ENCODE measurements at regions of chr1 and their contacts with region 1.

Region 1: GRCh38 chr1:54273092-54273794 is 73.3 kb downstream of the MRPL37 start:
- DNase-seq: peak in 1 of 2 experiments; percentile 65
- H3K4me3 ChIP-seq: no peak overlapping the region; a peak in 1 of 8 replicates
- H3K27ac ChIP-seq: no peak overlapping the region
- H3K4me1 ChIP-seq: peaks cover 9 to 28% (median 21%) of the 10 kb centered on the region in 4 experiments
- H3K27me3 ChIP-seq: no peaks in the 10 kb centered on the region
- CTCF ChIP-seq: peak; percentile 27 to 60 (median 59)
- EP300 ChIP-seq: no peak
- POLR2A ChIP-seq: no peak
- RAD21 ChIP-seq: peak; percentile 59 to 65

Region 2: GRCh38 chr1:53982034-53982762 is 291.0 kb before region 1 on chr1:
- CTCF ChIA-PET with region 1: no interaction called
- POLR2A ChIA-PET with region 1: no interaction called
- DNase-seq: peak; percentile 54 to 76
- H3K4me3 ChIP-seq: peak overlapping the region in 2 of 4 experiments; percentile 29 to 51; a peak in 5 of 8 replicates
- H3K27ac ChIP-seq: no peak overlapping the region
- H3K4me1 ChIP-seq: peaks cover 0 to 5% (median 0%) of the 10 kb centered on the region in 4 experiments; a peak in 2 of 7 replicates
- H3K27me3 ChIP-seq: peaks cover 0 to 2% (median 0%) of the 10 kb centered on the region in 4 experiments; a peak in 1 of 7 replicates
- CTCF ChIP-seq: no peak
- EP300 ChIP-seq: no peak
- POLR2A ChIP-seq: peak in 1 of 2 experiments; percentile 61; a peak in 2 of 3 replicates
- RAD21 ChIP-seq: no peak

Region 3: DNA sequence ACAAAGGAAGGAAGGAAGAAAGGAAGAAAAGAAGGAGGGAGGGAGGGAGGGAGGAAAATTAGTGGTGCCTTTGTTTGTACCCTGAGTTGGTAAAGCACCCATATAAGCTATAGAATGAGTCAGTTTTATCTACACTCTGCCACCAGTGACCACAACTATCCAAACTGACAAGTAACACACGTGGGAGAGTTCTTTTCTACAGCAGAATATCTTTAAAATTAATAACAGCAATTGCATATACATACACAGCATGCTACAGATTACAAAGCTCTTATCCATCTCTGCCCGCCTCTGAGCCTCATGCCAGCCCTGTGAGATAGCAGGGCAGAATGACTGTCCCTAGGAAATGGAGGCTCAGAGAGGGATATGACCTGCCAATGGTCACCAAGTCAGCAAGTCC is 140.7 kb before region 1 on chr1:
- CTCF ChIA-PET with region 1: no interaction called
- POLR2A ChIA-PET with region 1: no interaction called
- DNase-seq: no peak
- H3K4me3 ChIP-seq: no peak overlapping the region
- H3K27ac ChIP-seq: no peak overlapping the region
- H3K4me1 ChIP-seq: peaks cover 12 to 24% (median 16%) of the 10 kb centered on the region in 4 experiments
- H3K27me3 ChIP-seq: no peaks in the 10 kb centered on the region
- CTCF ChIP-seq: no peak
- EP300 ChIP-seq: no peak
- POLR2A ChIP-seq: no peak
- RAD21 ChIP-seq: no peak

Region 4: GRCh38 chr1:54287176-54287650 is 14.0 kb after region 1 on chr1:
- CTCF ChIA-PET with region 1: interaction called, 36 read pairs
- POLR2A ChIA-PET with region 1: interaction called, 6 read pairs
- DNase-seq: peak in 1 of 2 experiments; percentile 52
- H3K4me3 ChIP-seq: no peak overlapping the region
- H3K27ac ChIP-seq: no peak overlapping the region
- H3K4me1 ChIP-seq: peaks cover 8 to 29% (median 25%) of the 10 kb centered on the region in 4 experiments
- H3K27me3 ChIP-seq: no peaks in the 10 kb centered on the region
- CTCF ChIP-seq: no peak
- EP300 ChIP-seq: no peak
- POLR2A ChIP-seq: no peak
- RAD21 ChIP-seq: no peak

Region 5: DNA sequence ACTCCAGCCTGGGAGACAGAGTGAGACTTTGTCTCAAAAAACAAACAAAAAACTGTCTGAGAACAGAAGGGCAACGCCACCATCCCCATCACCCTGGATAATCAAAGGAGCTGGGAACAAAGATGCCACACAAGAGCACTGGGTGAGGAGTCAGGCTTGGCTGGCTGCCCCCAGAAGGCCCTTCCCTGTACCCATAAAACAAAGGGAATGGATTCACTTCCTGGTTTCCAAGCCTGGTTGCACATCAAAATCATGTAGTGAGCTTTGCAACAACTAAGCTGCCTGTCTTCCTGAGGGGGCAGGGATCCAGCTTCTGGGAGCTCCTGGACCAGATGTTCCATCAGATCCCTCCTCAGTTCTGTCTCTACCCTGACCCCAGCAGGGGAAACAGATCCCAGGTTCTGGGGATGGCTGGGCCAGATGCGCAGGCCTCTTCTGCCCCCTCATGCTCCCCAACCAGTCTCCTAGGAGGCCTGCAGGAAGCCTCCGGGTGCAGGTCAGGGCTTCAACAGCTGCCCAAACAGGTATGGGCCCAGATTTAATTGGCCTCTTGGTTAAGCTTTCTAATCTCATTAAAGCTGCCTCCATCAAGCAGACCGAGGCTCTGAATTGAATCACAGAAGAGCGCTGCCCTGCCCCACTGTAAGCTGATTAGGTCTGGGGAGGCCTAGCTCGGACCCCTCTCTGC is 24.5 kb after region 1 on chr1:
- CTCF ChIA-PET with region 1: interaction called, 36 read pairs
- POLR2A ChIA-PET with region 1: interaction called, 3 read pairs
- DNase-seq: no peak
- H3K4me3 ChIP-seq: no peak overlapping the region
- H3K27ac ChIP-seq: no peak overlapping the region
- H3K4me1 ChIP-seq: peaks cover 6 to 26% (median 19%) of the 10 kb centered on the region in 4 experiments
- H3K27me3 ChIP-seq: no peaks in the 10 kb centered on the region
- CTCF ChIP-seq: no peak
- EP300 ChIP-seq: no peak
- POLR2A ChIP-seq: no peak
- RAD21 ChIP-seq: no peak

Region 6: GRCh38 chr1:54302951-54303843 is 30.0 kb after region 1 on chr1:
- CTCF ChIA-PET with region 1: interaction called, 11 read pairs
- POLR2A ChIA-PET with region 1: interaction called, 3 read pairs
- DNase-seq: no peak
- H3K4me3 ChIP-seq: no peak overlapping the region
- H3K27ac ChIP-seq: no peak overlapping the region
- H3K4me1 ChIP-seq: peaks cover 15 to 32% (median 21%) of the 10 kb centered on the region in 4 experiments
- H3K27me3 ChIP-seq: no peaks in the 10 kb centered on the region
- CTCF ChIP-seq: no peak
- EP300 ChIP-seq: no peak
- POLR2A ChIP-seq: no peak
- RAD21 ChIP-seq: no peak

Region 7: DNA sequence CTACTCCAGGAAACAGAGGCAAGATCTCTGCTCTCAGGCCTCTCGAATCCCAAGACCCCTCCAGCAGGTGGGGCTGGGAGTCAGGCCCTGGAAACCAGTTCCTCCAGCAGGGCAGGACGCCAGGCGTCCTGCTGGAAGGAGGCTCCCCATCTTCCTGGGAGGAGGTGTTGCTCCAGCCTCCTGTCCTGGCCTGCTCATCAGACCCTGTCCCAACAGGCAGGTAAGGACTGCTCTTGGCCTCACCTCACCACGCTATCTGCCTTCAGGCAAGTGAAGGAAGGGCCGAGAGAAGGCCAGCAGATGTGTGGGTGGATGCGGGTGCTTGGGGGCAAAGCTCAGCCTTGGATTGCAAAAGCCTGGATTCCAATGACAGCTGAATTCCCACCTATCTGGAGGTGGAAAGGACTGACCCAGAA is 50.1 kb after region 1 on chr1:
- CTCF ChIA-PET with region 1: interaction called, 10 read pairs
- POLR2A ChIA-PET with region 1: no interaction called
- DNase-seq: no peak
- H3K4me3 ChIP-seq: no peak overlapping the region
- H3K27ac ChIP-seq: no peak overlapping the region
- H3K4me1 ChIP-seq: peaks cover 22 to 43% (median 34%) of the 10 kb centered on the region in 4 experiments
- H3K27me3 ChIP-seq: no peaks in the 10 kb centered on the region
- CTCF ChIP-seq: peak; percentile 36 to 51 (median 47)
- EP300 ChIP-seq: no peak
- POLR2A ChIP-seq: no peak
- RAD21 ChIP-seq: peak; percentile 58 to 73

Measured in H1 (cell line).